Vagina (tissue), 2 donors: ENCODE measurements at regions of chr18 and their contacts with region 1.

Region 1: GRCh38 chr18:63099848-63100629 is 219.5 kb downstream of the BCL2 start:
- DNase-seq: peak in 1 of 2 donors; percentile 69
- H3K4me3 ChIP-seq: no peak overlapping the region
- H3K27ac ChIP-seq: no peak overlapping the region
- H3K4me1 ChIP-seq: no peaks in the 10 kb centered on the region
- H3K27me3 ChIP-seq: no peaks in the 10 kb centered on the region
- CTCF ChIP-seq: no peak
- POLR2A ChIP-seq: no peak

Region 2: GRCh38 chr18:63025251-63026090 is 74.6 kb before region 1 on chr18:
- intact Hi-C with region 1: loop called (anchors 10 kb)
- DNase-seq: no peak
- H3K4me3 ChIP-seq: no peak overlapping the region
- H3K27ac ChIP-seq: no peak overlapping the region
- H3K4me1 ChIP-seq: no peaks in the 10 kb centered on the region
- H3K27me3 ChIP-seq: no peaks in the 10 kb centered on the region
- CTCF ChIP-seq: no peak
- POLR2A ChIP-seq: no peak

Region 3: DNA sequence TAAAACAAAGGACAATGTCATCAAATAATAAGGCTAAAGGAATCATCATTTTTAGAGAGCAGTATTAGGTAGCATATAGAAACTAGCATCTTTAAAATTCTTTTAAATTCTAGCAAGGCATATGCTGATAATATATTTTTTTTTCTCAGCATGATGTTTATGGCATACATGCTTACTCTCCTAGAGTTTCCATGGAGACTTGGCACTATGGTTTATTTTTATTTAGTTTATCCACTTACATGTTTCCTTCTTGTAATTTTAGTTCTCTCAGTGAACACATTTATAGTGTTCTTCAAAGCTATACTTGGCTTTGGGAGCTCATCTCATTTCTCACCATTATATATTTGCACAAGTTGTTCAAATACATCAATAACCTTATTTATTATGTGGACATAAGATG is 1462.6 kb after region 1 on chr18:
- intact Hi-C with region 1: no loop called
- DNase-seq: no peak
- H3K4me3 ChIP-seq: no peak overlapping the region
- H3K27ac ChIP-seq: no peak overlapping the region
- H3K4me1 ChIP-seq: no peaks in the 10 kb centered on the region
- H3K27me3 ChIP-seq: no peaks in the 10 kb centered on the region
- CTCF ChIP-seq: no peak
- POLR2A ChIP-seq: no peak